Natural killer cell (primary cell): ENCODE measurements at regions of chr2 and their contacts with region 1.

Region 1: DNA sequence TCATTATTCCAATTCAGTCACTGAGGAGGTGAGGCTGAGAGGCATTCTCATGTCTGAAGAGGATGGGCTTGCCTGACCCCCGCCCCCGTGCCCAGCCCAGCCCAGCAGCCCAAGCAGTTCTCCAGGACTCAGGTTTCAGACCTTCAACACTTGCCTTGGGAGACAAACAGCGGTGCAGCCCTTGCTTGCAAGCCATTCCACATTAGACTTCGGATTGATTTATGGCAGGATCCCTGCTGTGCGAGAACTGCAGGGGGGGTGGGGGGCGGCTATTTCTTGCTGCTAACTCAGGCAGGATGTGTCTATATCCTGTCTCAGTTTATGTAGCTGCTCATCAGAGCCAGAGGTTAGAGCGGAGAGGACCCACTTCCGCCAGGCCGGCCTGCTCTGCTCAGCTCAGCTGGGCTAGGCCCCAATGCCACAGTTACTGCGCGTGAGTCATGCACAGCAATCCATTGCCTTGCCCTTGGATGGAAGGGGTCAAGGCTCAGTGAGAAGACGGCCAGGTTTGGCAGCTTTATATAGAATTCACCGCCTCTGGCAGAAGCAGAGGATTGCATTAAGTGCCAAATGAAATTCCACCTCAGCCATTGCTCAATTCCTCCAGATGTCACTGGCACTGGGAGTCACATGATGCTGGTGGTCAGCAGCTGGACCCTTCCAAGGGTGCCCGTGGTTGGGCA is 1.8 kb downstream of the GYPC start:
- DNase-seq: peak; percentile 68 to 84
- ATAC-seq: peak; percentile 73 to 87 (median 84)
- H3K4me3 ChIP-seq: peak overlapping the region; percentile 81
- H3K4me3 Mint-ChIP-seq: peak overlapping the region; percentile 94
- H3K27ac ChIP-seq: peak overlapping the region; percentile 93
- H3K27ac Mint-ChIP-seq: peak overlapping the region; percentile 89 to 97
- H3K4me1 ChIP-seq: peaks cover 68% of the 10 kb centered on the region
- H3K4me1 Mint-ChIP-seq: peaks cover 72 to 73% of the 10 kb centered on the region in 2 donors
- H3K27me3 ChIP-seq: no peaks in the 10 kb centered on the region
- H3K27me3 Mint-ChIP-seq: no peaks in the 10 kb centered on the region
- CTCF ChIP-seq: no peak

Region 2: GRCh38 chr2:126444512-126444911 is 213.3 kb before region 1 on chr2:
- intact Hi-C with region 1: no loop called
- DNase-seq: no peak
- ATAC-seq: no peak
- H3K4me3 ChIP-seq: no peak overlapping the region
- H3K4me3 Mint-ChIP-seq: no peak overlapping the region
- H3K27ac ChIP-seq: no peak overlapping the region
- H3K27ac Mint-ChIP-seq: no peak overlapping the region
- H3K4me1 ChIP-seq: no peaks in the 10 kb centered on the region
- H3K4me1 Mint-ChIP-seq: no peaks in the 10 kb centered on the region
- H3K27me3 ChIP-seq: no peaks in the 10 kb centered on the region
- H3K27me3 Mint-ChIP-seq: no peaks in the 10 kb centered on the region
- CTCF ChIP-seq: no peak

Region 3: DNA sequence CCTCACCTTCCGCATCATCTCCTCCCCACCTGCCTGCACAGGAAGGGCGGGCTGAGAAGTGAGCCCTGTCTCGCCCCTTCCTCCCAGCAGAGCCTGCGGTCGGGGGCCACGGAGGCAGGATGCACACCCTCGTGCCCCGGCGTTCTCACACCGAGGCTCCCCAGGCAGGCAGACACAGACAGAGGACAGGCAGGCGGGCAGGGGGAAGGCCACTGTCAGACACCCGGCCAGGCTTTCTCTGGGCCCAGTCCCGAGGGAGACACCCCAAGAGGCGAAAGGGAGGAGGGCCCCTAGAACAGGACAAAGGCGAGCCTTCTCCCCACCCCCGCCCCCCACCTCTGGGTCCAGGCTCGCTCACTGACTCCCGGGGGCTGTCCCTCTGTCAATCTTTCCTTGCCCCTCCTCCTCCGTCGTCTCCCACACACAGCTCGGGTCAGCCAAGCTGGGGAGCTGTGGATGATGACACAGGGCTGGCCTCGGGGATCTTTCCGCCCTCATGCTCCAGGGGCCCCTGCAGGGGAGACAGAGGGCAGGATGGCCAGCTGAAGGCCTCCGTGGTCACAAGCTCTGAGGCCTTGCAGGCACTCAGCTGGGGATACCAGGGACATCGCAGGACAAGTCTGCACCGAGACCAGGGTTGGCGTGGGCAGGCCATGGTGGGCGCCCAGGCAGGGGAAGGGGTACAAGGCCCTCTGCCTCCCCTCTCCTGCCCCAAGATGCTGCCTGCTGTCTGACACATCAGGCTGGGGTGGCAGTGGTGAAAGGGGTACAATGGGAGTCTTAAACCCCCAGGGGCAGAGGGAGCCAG is 424.3 kb after region 1 on chr2:
- intact Hi-C with region 1: loop called (anchors 2 kb)
- DNase-seq: peak; percentile 74 to 92
- ATAC-seq: peak; percentile 64 to 84 (median 80)
- H3K4me3 ChIP-seq: peak overlapping the region; percentile 84
- H3K4me3 Mint-ChIP-seq: peak overlapping the region; percentile 89
- H3K27ac ChIP-seq: peak overlapping the region; percentile 99
- H3K27ac Mint-ChIP-seq: peak overlapping the region; percentile 93 to 97
- H3K4me1 ChIP-seq: peaks cover 100% of the 10 kb centered on the region
- H3K4me1 Mint-ChIP-seq: peaks cover 73 to 97% of the 10 kb centered on the region in 2 donors
- H3K27me3 ChIP-seq: no peaks in the 10 kb centered on the region
- H3K27me3 Mint-ChIP-seq: no peaks in the 10 kb centered on the region
- CTCF ChIP-seq: no peak